ENCODE measurements at regions of chr14 and their contacts with region 1.

Region 1: DNA sequence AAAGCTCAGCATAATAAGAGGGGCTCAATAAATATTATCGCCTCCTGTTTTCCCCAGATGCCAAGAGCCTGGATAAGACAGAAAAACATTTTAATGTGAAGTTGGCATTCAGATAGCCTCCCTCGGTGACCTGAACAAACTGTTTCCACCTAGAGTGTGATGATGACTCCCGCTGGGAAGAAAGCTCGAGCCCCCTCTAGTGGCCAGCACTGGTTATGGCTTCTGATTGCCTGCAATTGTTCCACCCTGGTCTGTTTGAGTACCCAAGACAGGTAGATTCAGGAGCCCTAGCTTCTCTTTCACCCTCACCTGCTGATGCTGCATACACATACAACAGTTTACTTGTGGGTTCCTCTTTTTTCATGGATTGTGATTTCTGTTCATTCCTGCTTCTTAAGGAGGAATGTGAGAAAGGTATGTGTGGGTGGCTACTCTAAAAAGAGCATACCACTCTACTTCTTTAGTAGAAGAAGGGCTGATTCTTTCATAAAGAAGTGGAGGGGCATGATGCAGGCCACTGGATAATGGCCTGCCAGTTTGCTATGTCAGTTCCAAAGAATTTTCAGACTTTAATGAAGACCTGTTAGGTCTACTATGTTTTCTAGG is 6.4 kb downstream of the ERG28 start:
- DNase-seq: peak; percentile 58 to 84 (median 74)
- ATAC-seq: peak; percentile 93 to 96
- H3K4me3 Mint-ChIP-seq: no peak overlapping the region
- H3K27ac Mint-ChIP-seq: peak overlapping the region in 2 of 10 donors; percentile 49 to 50
- H3K4me1 Mint-ChIP-seq: peaks cover 0 to 13% (median 5%) of the 10 kb centered on the region in 4 donors
- H3K27me3 Mint-ChIP-seq: no peaks in the 10 kb centered on the region

Region 2: DNA sequence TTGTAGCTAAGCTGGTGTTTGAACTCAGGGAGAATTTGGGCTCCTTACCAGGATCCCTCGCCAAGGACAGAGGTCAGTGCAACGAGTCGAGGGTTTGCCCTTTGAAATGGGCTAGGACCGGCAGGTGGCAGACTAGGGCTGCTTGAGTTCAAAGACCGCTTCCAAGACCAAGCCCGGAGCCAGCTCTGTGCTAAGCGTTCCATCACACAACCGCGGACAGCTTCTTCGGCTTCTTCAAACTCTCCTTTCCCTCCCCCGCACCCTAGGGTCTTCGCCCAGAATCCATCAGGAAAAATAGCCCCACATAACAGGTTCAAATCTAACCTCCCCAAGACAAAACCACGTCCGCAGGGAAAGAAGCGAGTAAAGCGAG is 76.5 kb before region 1 on chr14:
- POLR2A ChIA-PET with region 1: interaction called, 17 read pairs
- DNase-seq: peak; percentile 40 to 82 (median 58)
- ATAC-seq: peak; percentile 85 to 90
- H3K4me3 Mint-ChIP-seq: peak overlapping the region in 8 of 10 donors; percentile 87 to 96 (median 94)
- H3K27ac Mint-ChIP-seq: peak overlapping the region; percentile 15 to 90 (median 80)
- H3K4me1 Mint-ChIP-seq: peaks cover 8 to 22% (median 12%) of the 10 kb centered on the region in 4 donors
- H3K27me3 Mint-ChIP-seq: peaks cover 0 to 8% (median 0%) of the 10 kb centered on the region in 5 donors

Measured in naive thymus-derived CD8-positive, alpha-beta T cell (primary cell).